RWPE1 (cell line): ENCODE measurements at regions of chr5 and their contacts with region 1.

Region 1: DNA sequence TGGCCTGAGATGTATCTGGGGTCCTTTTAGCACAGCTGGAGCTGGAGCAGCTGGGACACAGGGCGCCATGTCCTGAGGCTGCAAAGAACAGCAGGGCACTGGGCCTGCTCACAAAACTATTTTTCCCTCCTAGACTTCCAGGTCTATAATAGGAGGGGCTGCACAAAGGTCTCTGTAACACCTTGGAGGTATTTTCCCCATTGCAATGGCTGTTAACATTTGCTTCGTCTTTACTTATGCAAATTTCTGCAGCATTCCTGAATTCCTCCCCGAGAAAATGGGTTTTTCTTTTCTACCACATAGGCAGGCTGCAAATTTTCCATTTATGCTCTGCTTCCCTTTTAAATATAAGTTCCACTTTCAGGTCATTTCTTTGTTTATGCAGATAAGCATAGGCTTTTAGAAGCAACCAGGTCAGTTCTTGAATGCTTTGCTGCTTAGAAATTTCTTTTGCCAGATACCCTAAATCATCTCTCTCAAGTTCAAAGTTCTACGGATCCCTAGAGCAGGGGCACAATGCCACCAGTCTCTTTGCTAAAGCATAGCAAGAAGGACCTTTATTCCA is 130.8 kb downstream of the PCSK1 start:
- DNase-seq: no peak
- H3K27ac ChIP-seq: no peak overlapping the region
- CTCF ChIP-seq: no peak

Region 2: DNA sequence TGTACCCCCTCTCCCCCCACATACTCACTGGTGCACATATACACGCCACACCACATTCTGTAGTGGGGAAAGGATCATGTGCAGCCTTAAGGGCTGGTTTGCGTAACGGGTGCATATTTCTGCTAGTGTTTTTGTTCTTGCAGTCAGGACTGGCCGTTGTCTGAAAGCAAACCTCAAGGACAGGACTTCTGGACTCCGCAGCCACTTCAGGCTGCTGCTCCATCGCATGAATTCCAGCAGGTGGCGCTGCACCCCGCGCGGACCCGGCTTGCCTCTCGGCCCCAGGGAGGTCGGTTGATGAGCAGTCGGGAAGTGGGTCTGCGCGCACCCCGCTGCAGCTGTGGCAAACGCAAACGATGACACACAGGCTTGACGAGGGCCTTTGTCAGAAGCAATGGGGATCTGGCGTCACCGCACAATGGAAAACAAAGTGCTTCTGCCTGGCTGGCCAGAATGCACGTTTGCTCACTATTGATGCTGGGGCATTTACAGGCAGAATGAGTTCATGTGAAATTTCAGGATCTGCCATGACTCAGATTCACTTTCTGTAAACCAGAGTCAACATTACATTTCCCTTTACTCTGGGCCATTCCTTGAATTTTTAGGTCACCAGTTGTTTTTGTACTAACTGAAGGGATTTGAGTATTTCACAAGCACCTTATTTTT is 443.5 kb before region 1 on chr5:
- CTCF ChIA-PET with region 1: interaction called, 11 read pairs
- POLR2A ChIA-PET with region 1: no interaction called
- DNase-seq: peak; percentile 97
- H3K27ac ChIP-seq: peak overlapping the region; percentile 91
- CTCF ChIP-seq: peak; percentile 99

Region 3: DNA sequence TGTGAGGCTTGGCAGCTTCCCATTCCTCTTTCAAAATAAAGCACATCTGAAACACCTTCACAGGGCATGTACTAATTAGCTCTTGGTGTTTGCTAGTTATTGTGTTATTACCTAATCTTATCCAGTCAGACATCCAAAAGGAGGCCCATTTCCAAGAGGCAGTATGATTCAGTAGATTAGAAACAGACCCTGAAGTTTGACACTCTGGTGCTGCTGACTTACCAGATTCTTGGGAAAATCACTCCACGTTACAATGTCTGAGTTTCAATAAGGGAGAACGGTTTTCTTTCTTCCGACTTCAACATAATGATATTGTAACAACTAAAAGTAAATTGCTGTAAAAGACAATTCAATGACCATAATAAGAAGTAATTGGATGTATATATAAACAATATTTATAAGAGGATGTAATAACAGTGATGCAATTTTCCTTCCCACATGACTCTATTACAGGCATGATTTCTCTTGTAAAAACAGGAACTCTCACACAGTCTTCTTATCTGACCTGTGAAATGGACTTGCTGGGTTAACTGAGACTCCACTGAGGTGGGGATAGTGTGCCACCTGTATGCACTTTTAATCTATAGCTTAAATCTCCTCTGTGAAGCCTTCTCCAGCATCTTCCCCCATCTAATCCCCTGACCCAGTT is 159.3 kb before region 1 on chr5:
- CTCF ChIA-PET with region 1: no interaction called
- POLR2A ChIA-PET with region 1: no interaction called
- DNase-seq: no peak
- H3K27ac ChIP-seq: no peak overlapping the region
- CTCF ChIP-seq: no peak

Region 4: GRCh38 chr5:97026721-97027120 is 724.5 kb after region 1 on chr5:
- CTCF ChIA-PET with region 1: no interaction called
- POLR2A ChIA-PET with region 1: no interaction called
- DNase-seq: no peak
- H3K27ac ChIP-seq: no peak overlapping the region
- CTCF ChIP-seq: no peak